ENCODE measurements at regions of chr10 and their contacts with region 1.

Region 1: DNA sequence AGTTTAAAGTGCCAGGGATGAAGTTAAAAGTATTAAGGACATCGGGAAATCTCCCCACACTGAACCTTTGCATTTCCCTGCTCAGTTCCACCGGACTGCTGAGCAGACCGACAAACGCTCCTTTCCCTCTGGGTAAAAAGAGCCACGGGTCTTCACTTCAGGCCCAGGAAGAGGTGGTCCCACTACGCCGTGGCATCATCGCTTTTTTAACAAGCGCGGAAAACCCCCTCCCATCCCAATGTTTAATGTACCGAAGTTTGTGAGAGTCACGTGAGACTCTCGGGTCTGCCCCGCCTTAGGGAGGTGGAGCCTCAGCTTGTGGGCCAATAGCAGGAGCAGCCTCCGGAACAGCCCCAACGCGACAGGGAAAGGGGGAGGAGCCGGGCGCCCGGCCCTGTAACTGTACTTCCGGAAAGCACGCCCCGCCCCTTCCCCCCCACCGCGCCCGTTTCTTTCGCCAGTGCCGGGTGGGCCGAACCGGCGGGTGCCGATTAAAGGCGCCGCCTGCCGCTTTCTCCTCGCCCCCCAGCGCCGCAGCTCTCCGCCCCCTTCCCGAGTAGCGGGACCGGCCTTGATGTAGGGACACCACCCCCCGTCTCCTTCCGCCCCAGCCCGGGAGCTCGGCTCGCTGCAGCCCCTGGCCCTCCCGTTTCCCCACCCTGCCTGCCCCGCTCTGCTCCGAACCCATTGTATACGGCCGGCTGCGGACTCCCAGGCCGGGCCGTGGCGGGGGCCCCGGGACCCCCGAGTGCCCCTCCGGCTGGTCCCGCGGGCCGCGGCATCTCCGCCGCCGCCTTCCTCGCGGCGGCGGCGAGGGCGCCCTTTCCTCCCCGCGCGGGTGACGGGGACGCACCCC is 2.2 kb upstream of the TRIM8 start:
- DNase-seq: peak; percentile 99
- H3K4me3 Mint-ChIP-seq: peak overlapping the region; percentile 87
- H3K27ac Mint-ChIP-seq: peak overlapping the region; percentile 95
- H3K4me1 Mint-ChIP-seq: peaks cover 17% of the 10 kb centered on the region
- H3K27me3 Mint-ChIP-seq: no peaks in the 10 kb centered on the region

Region 2: DNA sequence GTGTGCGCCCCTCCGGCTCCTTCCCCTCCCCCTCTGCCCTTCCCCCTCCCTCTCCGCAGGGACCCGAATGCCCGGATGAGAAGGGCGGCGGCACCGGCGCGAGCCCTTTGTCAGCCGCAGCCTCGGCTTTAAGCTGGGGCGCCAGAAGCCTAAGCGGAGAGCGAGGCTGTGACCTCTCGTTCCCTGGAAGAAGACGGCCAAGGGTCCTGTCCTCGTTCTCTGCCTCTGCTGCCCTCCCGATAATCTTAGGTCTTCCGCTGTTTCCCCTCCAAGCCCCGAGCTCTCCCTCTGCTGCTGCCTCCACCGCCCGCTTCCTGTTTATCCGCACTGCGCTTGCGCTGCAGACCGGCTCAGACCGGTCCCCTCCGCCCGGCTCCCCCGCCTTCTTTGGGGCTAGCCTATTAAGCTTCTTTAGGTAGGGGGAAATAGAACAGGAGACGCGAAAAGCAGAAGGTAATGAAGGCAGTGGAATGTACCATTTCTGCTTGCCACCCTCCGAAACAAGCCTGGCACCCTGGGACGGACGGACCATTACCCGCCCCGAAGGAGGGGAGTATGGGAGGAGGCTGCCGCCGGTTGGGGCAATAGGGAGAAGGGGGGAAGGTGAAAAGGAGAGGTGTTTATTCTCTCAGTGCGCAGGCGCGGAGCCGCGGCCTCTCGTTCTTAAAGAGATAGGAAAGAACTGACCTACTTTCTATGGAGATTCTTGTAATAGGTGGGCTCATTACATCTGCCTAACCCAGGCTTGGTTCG is 823.8 kb before region 1 on chr10 and contains the start of gene OGA:
- CTCF ChIA-PET with region 1: no interaction called
- POLR2A ChIA-PET with region 1: no interaction called
- intact Hi-C with region 1: loop called (anchors 10 kb)
- DNase-seq: peak; percentile 99
- H3K4me3 Mint-ChIP-seq: peak within 1 kb of the TSS; percentile 97
- H3K27ac Mint-ChIP-seq: peak within 1 kb of the TSS; percentile 97
- H3K4me1 Mint-ChIP-seq: peaks cover 39% of the 10 kb centered on the region
- H3K27me3 Mint-ChIP-seq: no peaks in the 10 kb centered on the region
- total RNA-seq, gene OGA: 93.2 to 105 TPM

Region 3: DNA sequence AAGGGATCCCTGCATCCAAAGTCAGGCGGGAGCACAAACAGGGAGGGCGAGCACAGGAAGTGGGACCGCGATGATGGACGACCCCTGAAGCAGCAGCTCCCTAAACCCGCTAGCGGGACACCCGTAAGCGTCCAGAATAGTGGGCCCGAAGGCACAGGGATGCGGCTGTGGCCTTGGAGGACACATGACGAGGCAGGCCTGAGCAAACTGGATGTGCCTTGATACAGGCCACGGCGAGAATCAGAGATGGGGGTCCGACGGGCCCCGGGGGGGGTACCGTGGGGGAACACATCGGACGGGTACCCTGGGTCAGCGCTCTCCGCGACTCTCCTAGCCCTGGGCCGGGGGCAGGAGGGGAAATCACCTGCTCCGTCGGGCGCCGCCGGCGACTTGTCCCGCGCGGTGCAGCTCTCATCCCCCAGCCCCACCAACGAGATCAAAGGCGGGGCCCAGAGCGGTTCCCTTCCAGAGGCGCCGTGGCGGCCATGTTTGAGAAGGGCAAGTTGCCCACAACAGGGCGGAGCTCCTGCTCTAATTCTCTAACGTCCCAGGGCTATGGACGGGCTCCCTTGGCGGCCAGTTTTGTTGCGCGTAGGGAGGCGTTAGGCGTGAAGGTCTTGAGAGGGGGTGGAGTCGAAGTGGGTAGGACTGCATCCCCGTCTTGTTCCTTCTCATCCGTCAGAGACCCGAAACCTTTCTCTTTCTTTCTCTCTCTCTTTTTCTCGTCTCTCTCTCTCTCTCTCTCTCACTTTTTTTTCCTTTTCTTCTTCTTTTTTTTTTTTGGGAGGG is 209.8 kb before region 1 on chr10 and contains the start of gene CUEDC2:
- CTCF ChIA-PET with region 1: no interaction called
- POLR2A ChIA-PET with region 1: no interaction called
- intact Hi-C with region 1: loop called (anchors 5 kb)
- DNase-seq: peak; percentile 99
- H3K4me3 Mint-ChIP-seq: peak within 1 kb of the TSS; percentile 84
- H3K27ac Mint-ChIP-seq: peak within 1 kb of the TSS; percentile 88
- H3K4me1 Mint-ChIP-seq: peaks cover 42% of the 10 kb centered on the region
- H3K27me3 Mint-ChIP-seq: no peaks in the 10 kb centered on the region
- total RNA-seq, gene CUEDC2: 68.6 to 68.9 TPM

Region 4: GRCh38 chr10:102611514-102612087 is 30.5 kb before region 1 on chr10:
- CTCF ChIA-PET with region 1: interaction called, 5 read pairs
- POLR2A ChIA-PET with region 1: interaction called, 13 read pairs
- intact Hi-C with region 1: loop called (anchors 1 kb)
- DNase-seq: no peak
- H3K4me3 Mint-ChIP-seq: no peak overlapping the region
- H3K27ac Mint-ChIP-seq: peak overlapping the region; percentile 92
- H3K4me1 Mint-ChIP-seq: peaks cover 47% of the 10 kb centered on the region
- H3K27me3 Mint-ChIP-seq: no peaks in the 10 kb centered on the region

Region 5: DNA sequence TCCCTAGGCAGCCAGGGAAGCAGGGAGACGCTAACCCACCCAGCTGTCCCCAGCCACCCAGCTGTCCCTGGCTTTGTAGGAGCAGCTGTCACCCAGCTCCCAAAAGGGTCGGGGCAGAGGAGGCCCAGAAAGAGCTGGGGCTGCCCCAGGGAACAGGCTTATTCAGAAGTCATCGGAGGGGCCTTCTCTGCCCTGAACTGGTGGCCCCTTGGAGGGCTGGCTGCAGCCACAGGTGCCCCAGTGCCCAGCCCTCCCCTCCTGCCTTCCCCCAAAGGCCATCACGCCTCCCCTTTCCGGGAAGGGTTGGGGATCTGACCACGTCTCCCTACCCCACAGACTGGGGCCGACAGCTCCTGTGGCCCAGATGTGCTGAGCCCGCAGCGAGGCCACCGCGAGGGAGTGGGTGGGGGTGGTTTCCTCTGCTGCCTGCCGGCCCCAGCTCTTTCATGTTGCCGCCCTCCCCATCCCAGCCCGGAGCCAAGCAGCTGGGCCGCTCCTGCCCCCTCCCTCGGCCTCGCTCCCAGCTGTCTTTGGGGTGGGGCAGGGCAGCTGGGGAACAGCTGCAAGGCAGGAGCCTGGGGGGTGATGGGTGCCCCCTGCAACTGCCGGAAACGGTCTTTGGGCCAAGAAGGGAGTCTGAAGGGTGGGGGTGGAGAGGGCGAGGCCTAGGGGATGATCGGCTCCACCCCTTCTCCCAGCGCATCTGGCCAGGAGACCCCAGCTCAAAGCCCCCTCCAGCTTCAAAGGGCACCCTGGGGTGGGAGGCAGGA is 19.0 kb after region 1 on chr10:
- CTCF ChIA-PET with region 1: interaction called, 9 read pairs
- POLR2A ChIA-PET with region 1: interaction called, 44 read pairs
- intact Hi-C with region 1: loop called (anchors 1 kb)
- DNase-seq: peak; percentile 88
- H3K4me3 Mint-ChIP-seq: peak overlapping the region; percentile 62
- H3K27ac Mint-ChIP-seq: peak overlapping the region; percentile 87
- H3K4me1 Mint-ChIP-seq: peaks cover 44% of the 10 kb centered on the region
- H3K27me3 Mint-ChIP-seq: no peaks in the 10 kb centered on the region

Region 6: GRCh38 chr10:102713814-102714620 is 71.9 kb after region 1 on chr10 and contains the start of gene ARL3:
- CTCF ChIA-PET with region 1: interaction called, 27 read pairs
- POLR2A ChIA-PET with region 1: interaction called, 53 read pairs
- intact Hi-C with region 1: loop called (anchors 1 kb)
- DNase-seq: peak; percentile 99
- H3K4me3 Mint-ChIP-seq: peak within 1 kb of the TSS; percentile 84
- H3K27ac Mint-ChIP-seq: peak within 1 kb of the TSS; percentile 85
- H3K4me1 Mint-ChIP-seq: peaks cover 63% of the 10 kb centered on the region
- H3K27me3 Mint-ChIP-seq: no peaks in the 10 kb centered on the region
- total RNA-seq, gene ARL3: 10.1 to 11.1 TPM

Region 7: GRCh38 chr10:102729029-102730026 is 87.2 kb after region 1 on chr10:
- CTCF ChIA-PET with region 1: no interaction called
- POLR2A ChIA-PET with region 1: no interaction called
- intact Hi-C with region 1: no loop called
- DNase-seq: peak; percentile 69
- H3K4me3 Mint-ChIP-seq: no peak overlapping the region
- H3K27ac Mint-ChIP-seq: no peak overlapping the region
- H3K4me1 Mint-ChIP-seq: no peaks in the 10 kb centered on the region
- H3K27me3 Mint-ChIP-seq: no peaks in the 10 kb centered on the region

Measured in activated CD4-positive, alpha-beta memory T cell treated with anti-CD3 and anti-CD28 coated beads for 36 hours (primary cell).